ENCODE measurements at regions of chr12 and their contacts with region 1.

Region 1: DNA sequence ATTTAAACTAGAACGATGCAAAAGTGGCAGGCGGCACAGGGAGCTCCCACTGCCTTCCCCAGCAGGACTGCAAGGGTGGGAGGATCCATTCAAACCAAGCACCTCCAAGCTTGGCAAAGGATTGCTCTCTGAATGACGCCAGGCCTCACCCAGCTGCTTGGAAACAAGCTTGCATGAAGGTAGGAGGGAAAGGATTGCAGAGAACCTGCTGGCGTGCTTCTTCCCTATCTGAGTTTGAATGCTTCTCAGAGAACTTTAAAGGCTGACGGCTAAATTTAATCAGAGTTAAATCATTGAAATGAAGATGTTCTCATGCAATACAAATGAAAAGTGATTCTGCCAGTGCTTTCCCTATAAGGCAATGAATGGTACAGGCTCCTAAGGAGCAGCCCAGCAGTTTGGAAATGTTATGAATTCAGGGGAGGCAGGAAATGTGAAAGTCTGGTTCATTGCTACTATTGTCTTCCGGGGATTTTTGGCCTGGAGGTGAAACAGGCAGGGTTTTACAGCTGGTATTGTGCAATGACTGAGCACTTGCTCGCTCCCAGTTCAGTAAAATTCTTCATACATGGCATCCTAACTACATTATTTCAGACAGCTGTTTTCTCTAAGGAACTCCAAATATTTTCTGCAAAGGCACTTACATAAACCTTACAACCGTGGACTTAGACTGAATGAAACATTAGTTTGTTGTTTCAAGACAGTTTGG is 31.9 kb upstream of the DUSP6 start:
- DNase-seq: peak; percentile 23 to 26
- ATAC-seq: peak; percentile 66 to 71
- H3K4me3 ChIP-seq: no peak overlapping the region
- H3K27ac ChIP-seq: peak overlapping the region in 1 of 4 donors; percentile 24
- H3K4me1 ChIP-seq: peaks cover 5% of the 10 kb centered on the region in 2 donors
- H3K27me3 ChIP-seq: no peaks in the 10 kb centered on the region
- CTCF ChIP-seq: no peak
- POLR2A ChIP-seq: no peak

Region 2: GRCh38 chr12:89280833-89281538 is 103.2 kb before region 1 on chr12:
- in situ Hi-C with region 1: loop called in 1 of 4 experiments (anchors 25 kb)
- intact Hi-C with region 1: no loop called
- DNase-seq: no peak
- ATAC-seq: no peak
- H3K4me3 ChIP-seq: no peak overlapping the region
- H3K27ac ChIP-seq: peak overlapping the region in 1 of 4 donors; percentile 10
- H3K4me1 ChIP-seq: no peaks in the 10 kb centered on the region
- H3K27me3 ChIP-seq: no peaks in the 10 kb centered on the region
- CTCF ChIP-seq: no peak
- POLR2A ChIP-seq: no peak

Region 3: DNA sequence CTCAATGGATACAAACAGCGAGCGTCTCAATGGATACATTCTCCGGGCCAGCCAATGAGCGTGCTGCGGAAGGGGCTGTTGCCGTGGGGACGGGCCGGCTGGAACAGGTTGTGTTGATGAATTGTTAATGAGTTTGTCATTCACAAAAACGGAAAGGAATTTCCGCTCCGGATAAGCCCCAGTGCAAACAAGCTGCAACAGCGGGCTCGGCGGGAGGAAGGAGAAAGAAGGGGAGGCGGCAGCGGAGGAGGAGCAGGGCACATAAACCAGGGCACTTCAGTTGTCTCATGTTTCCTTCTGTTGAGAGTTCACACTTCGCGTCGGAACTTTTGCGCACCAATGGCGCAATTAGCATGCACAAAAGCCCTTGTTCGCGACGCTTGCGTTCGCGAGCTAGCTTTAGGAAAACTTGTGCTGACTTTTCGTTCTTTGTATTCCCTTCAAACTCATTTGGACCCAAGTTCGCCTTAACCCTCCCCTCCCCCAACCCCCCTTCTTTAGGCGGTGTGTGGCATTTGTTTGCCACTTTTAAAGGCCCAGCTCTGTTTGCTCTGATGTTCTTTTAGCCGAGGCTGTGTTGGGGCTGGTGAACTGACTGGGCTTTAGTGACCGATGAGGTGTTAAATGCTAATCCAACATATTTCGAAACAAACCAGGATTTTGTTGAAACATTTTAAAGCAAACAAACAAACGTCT is 31.6 kb before region 1 on chr12 and contains the start of gene DUSP6:
- in situ Hi-C with region 1: no loop called
- intact Hi-C with region 1: no loop called
- DNase-seq: peak; percentile 75 to 80
- ATAC-seq: peak; percentile 66 to 67
- H3K4me3 ChIP-seq: peak within 1 kb of the TSS; percentile 71 to 77 (median 74)
- H3K27ac ChIP-seq: peak within 1 kb of the TSS; percentile 78 to 85 (median 82)
- H3K4me1 ChIP-seq: peaks cover 4 to 32% of the 10 kb centered on the region in 2 donors
- H3K27me3 ChIP-seq: peaks cover 50 to 88% (median 77%) of the 10 kb centered on the region in 3 donors
- CTCF ChIP-seq: no peak
- POLR2A ChIP-seq: peak; percentile 37 to 54
- total RNA-seq, gene DUSP6: 4.2 to 23.8 (median 12.1) TPM

Measured in gastrocnemius medialis (tissue), 4 donors.